ENCODE measurements at regions of chr6 and their contacts with region 1.

Region 1: GRCh38 chr6:81638350-81638749 is 114.1 kb downstream of the TENT5A start:
- DNase-seq: no peak
- H3K4me3 Mint-ChIP-seq: no peak overlapping the region
- H3K27ac Mint-ChIP-seq: no peak overlapping the region
- H3K4me1 Mint-ChIP-seq: no peaks in the 10 kb centered on the region
- H3K27me3 Mint-ChIP-seq: no peaks in the 10 kb centered on the region
- CTCF ChIP-seq: no peak

Region 2: DNA sequence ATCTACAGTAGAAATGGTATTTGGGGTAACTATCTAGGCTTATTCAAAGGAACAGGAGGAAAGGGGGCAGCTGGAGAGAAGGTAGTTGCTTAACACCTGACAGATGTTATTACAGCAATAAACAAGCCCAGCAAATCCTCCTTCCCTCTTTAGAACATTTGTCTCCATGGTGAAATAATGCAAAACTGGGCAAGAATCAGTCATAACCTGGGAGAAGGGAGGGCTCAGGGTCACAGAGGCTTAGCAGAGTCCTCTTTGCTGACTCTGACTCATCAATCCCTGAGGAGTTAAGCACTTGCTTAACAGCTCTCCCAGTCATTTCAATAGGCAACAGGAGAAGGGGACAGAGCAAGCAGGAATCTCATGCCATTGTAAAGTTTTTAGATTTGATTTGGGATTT is 378.9 kb after region 1 on chr6:
- CTCF ChIA-PET with region 1: interaction called, 11 read pairs
- intact Hi-C with region 1: no loop called
- DNase-seq: no peak
- H3K4me3 Mint-ChIP-seq: no peak overlapping the region
- H3K27ac Mint-ChIP-seq: no peak overlapping the region
- H3K4me1 Mint-ChIP-seq: no peaks in the 10 kb centered on the region
- H3K27me3 Mint-ChIP-seq: no peaks in the 10 kb centered on the region
- CTCF ChIP-seq: no peak

Measured in Calu3 (cell line).